GM12878 (cell line): ENCODE measurements at regions of chr7 and their contacts with region 1.

Region 1: DNA sequence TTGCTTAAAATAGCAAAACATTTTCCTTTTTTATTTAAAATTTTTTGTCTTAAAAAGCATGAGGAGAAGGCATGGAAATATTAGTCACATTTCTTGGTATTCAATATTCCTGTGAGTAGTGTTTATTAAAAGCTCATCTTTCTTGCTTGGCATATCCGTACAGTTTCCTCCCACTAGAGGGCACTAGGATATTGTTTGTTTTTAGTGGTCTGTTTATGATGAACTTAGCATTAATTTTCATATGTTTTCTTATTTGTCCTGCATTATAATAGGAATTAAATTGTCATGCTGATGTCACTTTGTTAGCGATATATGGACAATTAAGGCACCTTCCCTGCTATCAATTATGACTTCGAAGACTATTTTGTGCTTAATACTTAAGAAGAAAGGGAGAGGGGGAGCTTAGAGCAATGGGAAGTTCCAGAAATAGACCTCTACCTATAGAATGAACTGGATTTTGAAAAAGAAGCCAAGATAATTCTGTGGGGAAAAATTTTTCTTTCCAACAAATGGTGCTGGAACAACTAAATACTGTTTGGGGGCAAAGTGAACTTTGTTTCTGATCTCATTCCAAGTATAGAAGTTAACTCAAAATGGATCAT is 91.0 kb upstream of the STRIP2 start:
- DNase-seq: no peak
- ATAC-seq: peak; percentile 84
- H3K4me3 ChIP-seq: no peak overlapping the region
- H3K27ac ChIP-seq: no peak overlapping the region
- H3K4me1 ChIP-seq: peaks cover 20% of the 10 kb centered on the region
- H3K27me3 ChIP-seq: no peaks in the 10 kb centered on the region
- CTCF ChIP-seq: peak; percentile 64 to 67 (median 65)
- EP300 ChIP-seq: no peak
- POLR2A ChIP-seq: no peak
- RAD21 ChIP-seq: peak; percentile 80

Region 2: GRCh38 chr7:129389829-129390228 is 46.6 kb after region 1 on chr7:
- CTCF ChIA-PET with region 1: interaction called, 20 read pairs
- POLR2A ChIA-PET with region 1: no interaction called
- RAD21 ChIA-PET with region 1: interaction called, 4 read pairs
- SMC1A ChIA-PET with region 1: interaction called, 9 read pairs
- in situ Hi-C with region 1: no loop called
- intact Hi-C with region 1: no loop called
- DNase-seq: no peak
- ATAC-seq: no peak
- H3K4me3 ChIP-seq: no peak overlapping the region
- H3K27ac ChIP-seq: no peak overlapping the region
- H3K4me1 ChIP-seq: no peaks in the 10 kb centered on the region; the same call in 1 of the 2 replicates
- H3K27me3 ChIP-seq: no peaks in the 10 kb centered on the region
- CTCF ChIP-seq: no peak
- EP300 ChIP-seq: no peak
- POLR2A ChIP-seq: no peak
- RAD21 ChIP-seq: no peak

Region 3: GRCh38 chr7:129468087-129468486 is 124.9 kb after region 1 on chr7:
- CTCF ChIA-PET with region 1: interaction called, 134 read pairs
- POLR2A ChIA-PET with region 1: interaction called, 3 read pairs
- RAD21 ChIA-PET with region 1: interaction called, 60 read pairs
- SMC1A ChIA-PET with region 1: interaction called, 107 read pairs
- in situ Hi-C with region 1: no loop called
- intact Hi-C with region 1: loop called (anchors 1 kb)
- DNase-seq: no peak
- ATAC-seq: no peak
- H3K4me3 ChIP-seq: no peak overlapping the region
- H3K27ac ChIP-seq: no peak overlapping the region
- H3K4me1 ChIP-seq: no peaks in the 10 kb centered on the region
- H3K27me3 ChIP-seq: no peaks in the 10 kb centered on the region
- CTCF ChIP-seq: no peak
- EP300 ChIP-seq: no peak
- POLR2A ChIP-seq: no peak
- RAD21 ChIP-seq: no peak

Region 4: DNA sequence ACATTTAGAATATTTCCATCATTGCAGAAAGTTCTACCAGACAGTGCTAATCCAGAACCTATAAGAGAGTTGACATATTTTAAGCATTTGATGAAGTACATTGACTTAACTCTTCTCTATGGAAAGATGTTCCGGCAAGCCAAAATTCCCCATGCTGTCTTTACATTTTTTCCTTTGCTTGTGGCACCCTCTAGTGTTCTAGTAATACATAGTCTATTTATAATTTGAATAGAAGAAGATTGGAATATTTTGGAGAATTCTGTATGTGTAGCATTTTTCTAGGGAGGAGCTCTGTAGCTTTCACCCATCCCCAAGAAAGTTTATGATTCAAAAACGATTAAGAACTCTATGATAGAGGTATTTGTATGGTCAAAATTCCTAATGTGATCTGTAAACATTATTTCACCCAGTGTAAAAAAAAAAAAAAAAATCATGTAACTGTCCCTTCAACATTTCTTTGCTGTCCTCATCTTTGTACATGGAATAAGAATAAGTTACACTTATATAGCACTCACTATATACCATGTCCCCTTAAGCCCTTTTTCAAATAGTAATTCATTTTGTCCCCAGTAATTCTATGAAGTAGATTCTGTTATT is 301.5 kb after region 1 on chr7:
- CTCF ChIA-PET with region 1: interaction called, 12 read pairs
- POLR2A ChIA-PET with region 1: no interaction called
- RAD21 ChIA-PET with region 1: interaction called, 9 read pairs
- SMC1A ChIA-PET with region 1: interaction called, 6 read pairs
- in situ Hi-C with region 1: loop called (anchors 10 kb)
- intact Hi-C with region 1: no loop called
- DNase-seq: no peak
- ATAC-seq: no peak
- H3K4me3 ChIP-seq: no peak overlapping the region
- H3K27ac ChIP-seq: no peak overlapping the region
- H3K4me1 ChIP-seq: peaks cover 5% of the 10 kb centered on the region; the same call in 1 of the 2 replicates
- H3K27me3 ChIP-seq: no peaks in the 10 kb centered on the region
- CTCF ChIP-seq: peak; percentile 7 to 42 (median 28); a peak in 3 of 6 replicates
- EP300 ChIP-seq: no peak
- POLR2A ChIP-seq: no peak
- RAD21 ChIP-seq: peak; percentile 49